ENCODE measurements at regions of chr1 and their contacts with region 1.

Region 1: GRCh38 chr1:27858072-27858958 is 14.0 kb upstream of the THEMIS2 start:
- DNase-seq: peak; percentile 90
- H3K4me3 Mint-ChIP-seq: no peak overlapping the region
- H3K27ac Mint-ChIP-seq: no peak overlapping the region
- H3K4me1 Mint-ChIP-seq: peaks cover 10% of the 10 kb centered on the region
- H3K27me3 Mint-ChIP-seq: no peaks in the 10 kb centered on the region

Region 2: GRCh38 chr1:27891196-27891889 is 33.0 kb after region 1 on chr1:
- CTCF ChIA-PET with region 1: interaction called, 11 read pairs
- POLR2A ChIA-PET with region 1: no interaction called
- intact Hi-C with region 1: no loop called
- DNase-seq: peak; percentile 66
- H3K4me3 Mint-ChIP-seq: no peak overlapping the region
- H3K27ac Mint-ChIP-seq: peak overlapping the region; percentile 86
- H3K4me1 Mint-ChIP-seq: peaks cover 51% of the 10 kb centered on the region
- H3K27me3 Mint-ChIP-seq: no peaks in the 10 kb centered on the region

Region 3: DNA sequence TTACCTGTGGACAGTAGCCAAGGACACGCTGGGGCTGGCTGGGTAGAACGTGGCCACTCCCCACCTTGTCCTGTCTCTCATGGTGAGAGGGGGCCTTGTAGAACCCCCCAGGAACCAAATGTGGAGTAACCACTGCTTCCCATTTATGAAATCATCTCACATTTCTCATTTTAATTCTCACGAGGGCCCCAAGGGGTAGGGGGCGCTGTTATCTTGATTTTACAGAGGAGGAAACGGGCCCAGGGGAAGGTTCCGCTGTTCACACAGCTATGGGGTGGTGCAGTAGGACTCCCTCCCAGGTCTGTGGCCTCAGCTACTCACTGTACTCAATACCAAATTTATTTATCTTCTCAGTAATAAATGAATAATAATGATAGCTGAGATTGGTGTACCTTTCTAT is 82.0 kb after region 1 on chr1:
- CTCF ChIA-PET with region 1: interaction called, 13 read pairs
- POLR2A ChIA-PET with region 1: no interaction called
- intact Hi-C with region 1: no loop called
- DNase-seq: peak; percentile 84
- H3K4me3 Mint-ChIP-seq: no peak overlapping the region
- H3K27ac Mint-ChIP-seq: peak overlapping the region; percentile 54
- H3K4me1 Mint-ChIP-seq: peaks cover 25% of the 10 kb centered on the region
- H3K27me3 Mint-ChIP-seq: peaks cover 7% of the 10 kb centered on the region

Region 4: DNA sequence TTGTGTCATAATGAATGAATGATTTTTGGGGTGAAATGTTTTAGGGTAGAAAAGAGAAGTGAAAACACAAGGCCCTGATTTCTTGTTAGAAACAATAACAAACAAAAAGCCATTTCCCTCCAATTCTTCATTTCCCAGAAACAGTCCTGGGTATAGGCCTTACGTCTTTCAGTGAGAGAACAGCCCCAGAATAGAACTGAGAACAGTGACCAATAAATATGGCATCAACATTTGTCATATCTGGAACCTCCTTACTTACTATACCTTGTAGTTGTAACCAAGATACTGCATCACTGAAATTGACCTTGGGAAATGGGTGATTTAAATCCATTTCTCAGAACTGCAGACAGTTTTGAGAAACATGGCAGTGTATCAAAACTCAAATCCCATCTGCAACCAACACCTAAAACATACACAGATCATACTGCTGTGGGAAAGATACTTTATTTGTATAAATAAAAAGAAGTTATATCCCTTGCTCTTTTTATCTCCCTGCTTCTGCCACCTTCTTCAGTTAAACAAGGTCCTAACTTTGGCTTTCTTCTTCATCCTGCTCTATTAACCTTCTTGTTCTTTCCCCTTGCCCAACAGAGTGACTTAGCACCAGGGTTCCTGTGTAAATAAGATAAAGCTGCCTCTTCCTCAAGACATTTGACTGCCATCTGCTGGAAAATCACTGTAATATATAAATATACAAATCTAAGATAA is 121.0 kb after region 1 on chr1:
- CTCF ChIA-PET with region 1: interaction called, 32 read pairs
- POLR2A ChIA-PET with region 1: no interaction called
- intact Hi-C with region 1: loop called (anchors 1 kb)
- DNase-seq: no peak
- H3K4me3 Mint-ChIP-seq: no peak overlapping the region
- H3K27ac Mint-ChIP-seq: no peak overlapping the region
- H3K4me1 Mint-ChIP-seq: no peaks in the 10 kb centered on the region
- H3K27me3 Mint-ChIP-seq: no peaks in the 10 kb centered on the region

Region 5: DNA sequence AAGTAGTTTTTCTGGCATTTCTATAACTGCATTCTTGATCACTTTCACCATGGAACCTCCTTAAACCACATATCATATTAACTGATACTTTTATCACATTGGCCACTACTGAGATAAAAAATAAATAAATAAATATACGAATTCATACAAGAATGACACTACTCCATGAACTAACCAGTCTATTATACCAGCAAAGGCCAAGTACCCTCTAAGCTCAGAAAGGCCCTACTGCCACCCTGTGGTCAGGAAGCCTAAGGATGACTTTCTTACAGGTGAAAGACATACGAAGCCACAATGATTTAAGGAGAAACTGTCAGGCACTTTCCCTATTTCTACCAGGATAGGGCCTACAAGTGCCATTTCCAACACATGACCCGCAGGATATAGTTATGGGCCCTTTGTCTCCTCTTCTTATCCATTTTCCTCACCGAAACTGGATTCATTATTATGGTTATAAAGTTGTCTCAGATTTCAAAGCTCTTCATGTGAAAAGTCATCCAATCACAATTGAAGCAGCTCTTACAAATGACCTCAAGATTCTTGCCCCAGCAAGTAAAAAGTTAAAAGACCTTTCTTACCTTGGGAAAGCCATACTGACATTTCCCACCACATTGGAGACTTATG is 350.6 kb after region 1 on chr1:
- CTCF ChIA-PET with region 1: interaction called, 12 read pairs
- POLR2A ChIA-PET with region 1: no interaction called
- intact Hi-C with region 1: loop called (anchors 5 kb)
- DNase-seq: peak; percentile 72
- H3K4me3 Mint-ChIP-seq: no peak overlapping the region
- H3K27ac Mint-ChIP-seq: no peak overlapping the region
- H3K4me1 Mint-ChIP-seq: peaks cover 2% of the 10 kb centered on the region
- H3K27me3 Mint-ChIP-seq: no peaks in the 10 kb centered on the region

Measured in activated CD4-positive, alpha-beta memory T cell treated with anti-CD3 and anti-CD28 coated beads for 36 hours (primary cell).